ENCODE measurements at regions of chr5 and their contacts with region 1.

Region 1: DNA sequence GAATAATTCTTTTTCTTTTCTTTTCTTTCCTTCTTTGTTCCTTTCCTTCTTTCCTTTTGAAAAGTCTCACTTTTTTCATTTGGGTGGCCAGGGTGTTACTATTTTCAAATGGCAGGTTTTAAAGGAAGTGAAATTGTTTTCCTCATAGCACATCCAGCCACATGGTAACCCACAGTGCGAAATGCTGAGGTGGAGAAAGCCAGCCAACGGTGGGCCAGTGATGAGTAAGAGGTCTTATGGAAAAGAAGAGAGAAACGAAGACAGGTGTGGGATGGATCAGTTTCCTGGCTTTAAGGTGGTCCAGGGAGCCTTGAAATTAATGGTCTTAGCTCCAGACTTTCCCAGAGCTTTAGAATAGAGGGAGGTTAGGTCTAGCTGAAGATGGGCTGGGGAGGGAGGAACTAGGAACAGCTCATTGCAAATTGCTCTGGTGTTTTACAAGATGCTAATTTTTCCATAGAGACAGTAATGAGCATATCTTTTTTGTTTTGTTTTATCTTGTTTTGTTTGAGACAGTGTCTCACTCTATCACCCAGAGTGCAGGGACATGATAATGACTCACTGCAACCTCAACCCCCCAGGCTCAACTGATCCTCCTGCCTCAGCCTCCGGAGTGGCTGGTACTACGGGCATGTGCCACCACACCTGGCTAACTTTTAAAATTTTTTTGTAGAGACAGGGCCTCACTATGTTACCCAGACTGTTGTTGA is 17.8 kb downstream of the ITK start:
- DNase-seq: peak; percentile 82
- H3K4me3 Mint-ChIP-seq: peak overlapping the region; percentile 69
- H3K27ac Mint-ChIP-seq: peak overlapping the region; percentile 96
- H3K4me1 Mint-ChIP-seq: peaks cover 80% of the 10 kb centered on the region
- H3K27me3 Mint-ChIP-seq: no peaks in the 10 kb centered on the region

Region 2: DNA sequence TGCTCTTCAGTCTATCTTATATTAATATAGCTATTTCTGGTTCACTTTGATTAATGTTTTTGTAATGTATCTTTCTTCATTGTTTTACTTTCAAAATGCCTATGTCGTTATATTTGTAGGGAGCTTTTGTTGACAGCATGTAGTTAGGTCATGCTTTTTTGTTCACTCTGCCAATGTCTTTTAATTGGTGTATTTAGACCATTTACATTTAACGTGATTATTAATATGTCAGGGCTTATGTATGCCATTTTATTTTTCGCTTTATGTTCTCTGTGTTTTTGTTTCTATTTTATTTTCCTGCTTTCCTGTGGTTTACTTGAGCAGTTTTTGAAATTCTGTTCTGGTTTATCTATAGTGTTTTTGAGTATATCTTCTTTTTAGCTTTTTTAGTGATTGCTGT is 43.1 kb before region 1 on chr5:
- intact Hi-C with region 1: no loop called
- DNase-seq: no peak
- H3K4me3 Mint-ChIP-seq: peak overlapping the region; percentile 75
- H3K27ac Mint-ChIP-seq: peak overlapping the region; percentile 88
- H3K4me1 Mint-ChIP-seq: peaks cover 62% of the 10 kb centered on the region
- H3K27me3 Mint-ChIP-seq: no peaks in the 10 kb centered on the region

Region 3: GRCh38 chr5:157167214-157167621 is 31.2 kb before region 1 on chr5:
- intact Hi-C with region 1: loop called (anchors 1 kb)
- DNase-seq: peak; percentile 78
- H3K4me3 Mint-ChIP-seq: peak overlapping the region; percentile 75
- H3K27ac Mint-ChIP-seq: peak overlapping the region; percentile 91
- H3K4me1 Mint-ChIP-seq: peaks cover 80% of the 10 kb centered on the region
- H3K27me3 Mint-ChIP-seq: no peaks in the 10 kb centered on the region

Region 4: GRCh38 chr5:157172403-157172802 is 26.0 kb before region 1 on chr5:
- intact Hi-C with region 1: loop called (anchors 1 kb)
- DNase-seq: peak; percentile 95
- H3K4me3 Mint-ChIP-seq: peak overlapping the region; percentile 81
- H3K27ac Mint-ChIP-seq: peak overlapping the region; percentile 96
- H3K4me1 Mint-ChIP-seq: peaks cover 76% of the 10 kb centered on the region
- H3K27me3 Mint-ChIP-seq: no peaks in the 10 kb centered on the region

Region 5: DNA sequence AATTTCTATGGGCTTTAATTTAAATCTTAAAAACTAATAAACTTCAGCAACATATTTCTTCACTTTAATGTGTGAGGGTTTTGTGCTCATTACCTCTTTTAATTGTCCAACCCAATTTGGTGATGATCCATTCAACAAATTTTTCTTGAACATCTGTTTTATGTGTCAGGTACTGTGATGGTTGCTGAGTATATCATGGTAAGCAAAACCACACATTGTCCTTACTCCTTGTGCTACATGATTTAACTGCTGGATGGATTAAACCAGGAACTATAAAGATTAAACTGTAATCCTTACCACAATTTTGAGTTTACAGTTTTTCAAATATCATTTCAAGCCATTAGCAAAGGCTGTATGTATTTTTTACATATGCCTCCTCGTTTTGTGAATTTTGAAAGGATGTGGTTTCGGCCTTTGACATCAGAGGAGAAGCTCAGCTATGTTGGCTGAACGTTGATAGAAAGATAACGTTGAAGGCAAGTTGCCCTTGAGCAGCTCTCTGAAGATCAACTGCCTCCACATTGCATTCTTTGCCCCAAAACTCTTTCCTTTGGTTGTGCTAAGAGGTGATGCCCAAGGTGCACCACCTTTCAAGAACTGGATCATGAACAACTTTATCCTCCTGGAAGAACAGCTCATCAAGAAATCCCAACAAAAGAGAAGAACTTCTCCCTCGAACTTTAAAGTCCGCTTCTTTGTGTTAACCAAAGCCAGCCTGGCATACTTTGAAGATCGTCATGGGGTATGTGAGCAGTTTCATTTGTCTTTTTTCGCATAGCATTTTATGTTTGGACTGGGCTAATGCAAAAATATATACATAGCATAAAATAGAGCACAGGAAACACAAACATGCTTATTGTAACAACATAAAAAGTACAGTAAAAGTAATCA is 17.8 kb before region 1 on chr5 and contains the start of gene ITK:
- intact Hi-C with region 1: loop called (anchors 2 kb)
- DNase-seq: peak; percentile 89
- H3K4me3 Mint-ChIP-seq: peak within 1 kb of the TSS; percentile 98
- H3K27ac Mint-ChIP-seq: peak within 1 kb of the TSS; percentile 99
- H3K4me1 Mint-ChIP-seq: peaks cover 40% of the 10 kb centered on the region
- H3K27me3 Mint-ChIP-seq: no peaks in the 10 kb centered on the region
- total RNA-seq, gene ITK: 230 and 237 TPM in 2 replicates

Measured in activated CD4-positive, alpha-beta T cell treated with anti-CD3 and anti-CD28 coated beads, Interleukin-2, amount 10 ng/mL, durations not matched to agents 24 days and 14 days (primary cell).